ENCODE measurements at regions of chr10 and their contacts with region 1.

Region 1: GRCh38 chr10:6401562-6402348 is 178.3 kb downstream of the PRKCQ start:
- DNase-seq: peak; percentile 76
- ATAC-seq: peak; percentile 89
- H3K4me3 Mint-ChIP-seq: peak overlapping the region; percentile 56
- H3K27ac Mint-ChIP-seq: peak overlapping the region; percentile 78
- H3K4me1 Mint-ChIP-seq: peaks cover 49% of the 10 kb centered on the region
- H3K27me3 Mint-ChIP-seq: peaks cover 11% of the 10 kb centered on the region

Region 2: DNA sequence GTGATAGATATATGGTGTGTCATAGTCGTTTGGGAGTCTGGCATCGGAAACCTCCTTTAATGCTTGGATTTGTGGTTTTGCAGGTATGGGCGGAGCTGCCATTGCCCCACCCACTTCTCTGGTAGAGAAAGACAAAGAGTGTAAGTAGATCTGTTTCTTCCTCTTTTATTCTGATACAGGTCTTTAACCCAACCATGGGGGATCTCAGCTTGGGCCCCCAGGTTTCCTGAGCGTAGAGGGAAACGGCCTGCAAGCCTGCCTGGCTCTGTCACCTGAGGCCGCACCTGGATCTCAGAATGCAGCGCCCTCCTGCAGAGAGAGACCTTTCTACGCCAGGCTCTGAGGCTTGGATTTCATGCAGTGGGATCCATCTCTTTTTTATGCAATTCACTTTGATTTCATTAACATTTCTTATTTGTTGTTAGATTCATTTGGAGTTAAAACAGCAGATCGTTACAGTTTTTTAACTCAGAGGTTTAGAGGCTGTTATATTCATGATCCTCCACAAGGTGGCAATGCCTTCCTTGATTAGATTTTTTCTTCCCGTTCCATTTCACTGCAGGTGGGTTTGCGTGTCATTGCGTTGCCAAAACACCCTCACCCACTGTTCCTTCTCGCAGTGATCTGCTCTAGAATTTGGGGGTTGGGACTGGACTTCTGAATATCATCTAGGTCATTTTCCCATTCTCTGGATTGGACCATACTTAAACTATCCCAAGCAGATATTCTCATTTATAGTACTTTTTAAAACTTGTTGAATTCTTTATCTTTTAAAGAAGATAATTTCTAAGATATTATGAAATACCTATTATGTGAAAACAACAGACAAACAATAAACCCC is 292.9 kb before region 1 on chr10:
- CTCF ChIA-PET with region 1: interaction called, 7 read pairs
- POLR2A ChIA-PET with region 1: no interaction called
- intact Hi-C with region 1: loop called (anchors 1 kb)
- DNase-seq: peak; percentile 45
- ATAC-seq: peak; percentile 63
- H3K4me3 Mint-ChIP-seq: no peak overlapping the region
- H3K27ac Mint-ChIP-seq: peak overlapping the region; percentile 89
- H3K4me1 Mint-ChIP-seq: peaks cover 31% of the 10 kb centered on the region
- H3K27me3 Mint-ChIP-seq: no peaks in the 10 kb centered on the region

Region 3: GRCh38 chr10:6232846-6233724 is 168.7 kb before region 1 on chr10:
- CTCF ChIA-PET with region 1: interaction called, 15 read pairs
- POLR2A ChIA-PET with region 1: no interaction called
- intact Hi-C with region 1: loop called (anchors 10 kb)
- DNase-seq: no peak
- ATAC-seq: no peak
- H3K4me3 Mint-ChIP-seq: no peak overlapping the region
- H3K27ac Mint-ChIP-seq: no peak overlapping the region
- H3K4me1 Mint-ChIP-seq: peaks cover 8% of the 10 kb centered on the region
- H3K27me3 Mint-ChIP-seq: no peaks in the 10 kb centered on the region

Region 4: GRCh38 chr10:6275022-6275997 is 126.4 kb before region 1 on chr10:
- CTCF ChIA-PET with region 1: interaction called, 4 read pairs
- POLR2A ChIA-PET with region 1: interaction called, 3 read pairs
- intact Hi-C with region 1: loop called in 1 of 2 experiments (anchors 10 kb)
- DNase-seq: peak; percentile 97
- ATAC-seq: peak; percentile 91
- H3K4me3 Mint-ChIP-seq: peak overlapping the region; percentile 70
- H3K27ac Mint-ChIP-seq: peak overlapping the region; percentile 97
- H3K4me1 Mint-ChIP-seq: peaks cover 69% of the 10 kb centered on the region
- H3K27me3 Mint-ChIP-seq: no peaks in the 10 kb centered on the region

Region 5: DNA sequence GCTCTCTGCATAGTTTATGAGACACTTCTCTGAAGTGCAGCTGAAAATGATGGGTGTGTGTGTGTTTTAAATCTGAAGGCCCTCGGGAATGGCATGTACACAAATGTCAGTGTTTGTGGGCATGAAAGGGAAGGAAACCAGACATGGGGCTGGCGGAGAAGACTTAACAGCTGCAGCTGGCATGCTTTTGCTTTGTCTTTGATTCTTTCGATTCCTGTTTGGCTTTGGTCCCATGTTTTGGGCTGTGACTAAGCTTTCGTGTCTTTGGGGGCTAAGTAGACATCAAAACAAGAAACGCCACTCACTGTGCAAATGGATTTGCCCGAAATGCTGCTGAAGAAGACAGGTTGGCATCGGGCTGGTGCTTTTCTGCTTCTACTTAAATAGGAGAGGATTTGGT is 19.7 kb before region 1 on chr10:
- CTCF ChIA-PET with region 1: interaction called, 17 read pairs
- POLR2A ChIA-PET with region 1: no interaction called
- intact Hi-C with region 1: no loop called
- DNase-seq: peak; percentile 66
- ATAC-seq: peak; percentile 82
- H3K4me3 Mint-ChIP-seq: peak overlapping the region; percentile 60
- H3K27ac Mint-ChIP-seq: peak overlapping the region; percentile 86
- H3K4me1 Mint-ChIP-seq: peaks cover 24% of the 10 kb centered on the region
- H3K27me3 Mint-ChIP-seq: no peaks in the 10 kb centered on the region

Region 6: GRCh38 chr10:7170626-7171322 is 769.0 kb after region 1 on chr10:
- CTCF ChIA-PET with region 1: no interaction called
- POLR2A ChIA-PET with region 1: no interaction called
- intact Hi-C with region 1: no loop called
- DNase-seq: no peak
- ATAC-seq: no peak
- H3K4me3 Mint-ChIP-seq: no peak overlapping the region
- H3K27ac Mint-ChIP-seq: no peak overlapping the region
- H3K4me1 Mint-ChIP-seq: no peaks in the 10 kb centered on the region
- H3K27me3 Mint-ChIP-seq: no peaks in the 10 kb centered on the region